Left cardiac atrium (tissue), 4 donors: ENCODE measurements at regions of chr1 and their contacts with region 1.

Region 1: DNA sequence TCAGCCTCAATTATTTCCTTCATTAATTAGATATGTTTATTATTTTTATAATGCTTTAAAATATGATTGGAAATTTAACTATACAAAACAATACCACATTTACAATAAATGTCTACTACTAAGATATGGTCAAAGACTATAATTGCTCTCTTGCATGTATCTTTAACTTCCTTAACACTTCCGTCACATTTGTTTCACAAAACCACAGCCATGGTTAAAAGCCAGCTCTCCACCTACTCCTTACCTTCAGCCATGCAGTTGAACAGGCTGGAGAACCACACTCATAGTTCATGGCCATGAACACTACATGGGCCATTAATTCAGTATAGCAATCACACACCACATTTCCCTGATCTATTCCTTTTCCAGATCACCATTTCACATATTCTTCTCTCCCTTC is 72.2 kb downstream of the NME7 start:
- DNase-seq: no peak
- ATAC-seq: no peak

Region 2: DNA sequence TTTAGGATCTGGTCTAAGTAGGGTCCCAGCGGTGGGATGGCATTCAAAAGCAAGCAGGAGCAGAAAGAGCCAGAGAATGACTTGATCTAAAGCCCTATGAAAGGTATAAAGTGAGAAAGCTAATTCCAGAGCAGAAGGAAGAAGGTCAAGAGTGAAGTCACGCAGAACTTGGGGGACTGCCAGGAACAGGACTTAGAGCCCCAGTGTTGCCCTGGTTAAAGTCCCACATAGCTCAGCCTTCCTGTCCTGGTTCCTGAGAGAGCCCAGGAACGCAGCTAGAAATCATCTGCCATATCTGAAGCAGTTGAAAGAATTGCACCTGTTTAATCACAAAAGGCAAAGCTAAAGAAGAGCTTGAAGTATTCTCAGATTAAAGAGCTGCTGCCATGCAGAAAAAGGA is 349.6 kb before region 1 on chr1:
- intact Hi-C with region 1: no loop called
- DNase-seq: peak; percentile 74
- ATAC-seq: peak; percentile 90 to 91

Region 3: GRCh38 chr1:169081503-169082123 is 213.8 kb before region 1 on chr1:
- intact Hi-C with region 1: no loop called
- DNase-seq: no peak
- ATAC-seq: peak; percentile 38 to 66

Region 4: GRCh38 chr1:169240449-169241237 is 54.8 kb before region 1 on chr1:
- intact Hi-C with region 1: loop called in 1 of 2 experiments (anchors 10 kb)
- DNase-seq: no peak
- ATAC-seq: peak in 1 of 2 donors; percentile 32

Region 5: GRCh38 chr1:169339773-169340172 is 44.3 kb after region 1 on chr1:
- intact Hi-C with region 1: no loop called
- DNase-seq: no peak
- ATAC-seq: no peak